ENCODE measurements at regions of chr2 and their contacts with region 1.

Region 1: GRCh38 chr2:168461942-168462331 is 5.9 kb downstream of the CERS6 start:
- DNase-seq: no peak
- ATAC-seq: no peak
- H3K4me3 ChIP-seq: peak overlapping the region; percentile 48; the same call in 1 of the 2 replicates
- H3K27ac ChIP-seq: no peak overlapping the region; the same call in 1 of the 2 replicates
- H3K4me1 ChIP-seq: peaks cover 33% of the 10 kb centered on the region
- H3K27me3 ChIP-seq: no peaks in the 10 kb centered on the region
- CTCF ChIP-seq: 0 out of 6 replicates have a peak, but pooled peaks of 1 of the 3 experiments have one; percentile 10
- EP300 ChIP-seq: no peak
- POLR2A ChIP-seq: no peak
- RAD21 ChIP-seq: no peak

Region 2: DNA sequence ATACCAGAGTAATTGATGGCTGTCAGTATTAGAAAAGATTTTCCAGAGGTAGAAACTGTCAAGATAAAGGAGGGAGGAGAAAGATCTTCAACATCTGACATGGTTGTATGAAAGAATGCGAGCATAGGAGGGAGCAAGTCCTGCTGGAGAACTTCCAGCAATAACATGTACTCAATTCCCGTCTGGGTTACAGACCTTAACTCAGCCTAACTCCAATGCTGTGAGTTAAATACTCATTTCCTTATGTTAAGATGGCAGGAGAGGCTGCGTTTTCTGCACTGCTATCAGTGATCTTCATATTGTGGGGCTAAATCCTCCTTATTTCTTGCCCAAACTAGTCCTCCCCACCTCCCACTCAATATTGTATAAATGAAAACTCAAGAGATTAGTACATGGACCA is 12.5 kb before region 1 on chr2:
- CTCF ChIA-PET with region 1: no interaction called
- POLR2A ChIA-PET with region 1: no interaction called
- RAD21 ChIA-PET with region 1: no interaction called
- SMC1A ChIA-PET with region 1: no interaction called
- in situ Hi-C with region 1: no loop called
- intact Hi-C with region 1: no loop called
- DNase-seq: no peak
- ATAC-seq: no peak
- H3K4me3 ChIP-seq: no peak overlapping the region
- H3K27ac ChIP-seq: no peak overlapping the region
- H3K4me1 ChIP-seq: no peaks in the 10 kb centered on the region
- H3K27me3 ChIP-seq: no peaks in the 10 kb centered on the region
- CTCF ChIP-seq: no peak
- EP300 ChIP-seq: no peak
- POLR2A ChIP-seq: no peak
- RAD21 ChIP-seq: no peak

Region 3: DNA sequence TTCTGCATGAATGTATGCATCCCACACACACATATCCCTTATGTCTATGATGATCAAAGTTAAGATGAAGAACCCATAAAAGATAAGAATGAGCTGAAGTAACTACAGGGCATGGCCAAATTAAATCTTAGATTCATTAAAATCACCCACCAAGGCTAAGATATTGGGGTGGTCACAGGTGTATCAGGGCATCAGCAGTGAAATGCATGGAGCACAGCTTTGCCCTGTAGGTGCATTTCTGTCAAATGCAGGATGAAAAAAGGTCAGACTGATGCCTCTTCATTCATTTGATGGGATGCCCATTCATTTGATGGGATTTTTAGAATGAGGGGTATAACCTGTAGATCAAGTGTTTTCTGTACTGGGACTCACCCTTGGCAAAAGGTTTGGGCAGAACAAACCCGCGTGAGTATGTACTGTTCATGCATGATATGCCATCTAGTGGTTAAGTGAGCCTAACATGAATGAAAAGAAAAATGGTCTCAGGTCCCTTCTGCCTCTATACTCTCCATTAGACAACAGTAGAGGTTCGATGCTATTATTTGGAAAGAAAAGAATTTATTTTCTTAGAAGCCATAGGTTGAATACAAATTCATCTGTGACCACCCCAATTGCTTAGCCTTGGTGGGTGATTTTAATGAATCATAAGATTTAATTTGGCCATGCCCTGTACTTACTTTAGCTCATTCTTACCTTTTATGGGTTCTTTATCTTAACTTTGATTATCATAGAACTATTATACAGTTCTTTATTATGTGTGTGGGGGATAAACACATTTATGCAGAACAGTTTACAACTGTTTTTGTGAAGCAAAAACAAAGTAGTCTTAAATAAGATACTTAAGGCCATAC is 297.3 kb after region 1 on chr2:
- CTCF ChIA-PET with region 1: no interaction called
- POLR2A ChIA-PET with region 1: no interaction called
- RAD21 ChIA-PET with region 1: no interaction called
- SMC1A ChIA-PET with region 1: no interaction called
- in situ Hi-C with region 1: no loop called
- intact Hi-C with region 1: loop called (anchors 5 kb)
- DNase-seq: peak; percentile 16
- ATAC-seq: peak; percentile 96
- H3K4me3 ChIP-seq: no peak overlapping the region
- H3K27ac ChIP-seq: no peak overlapping the region
- H3K4me1 ChIP-seq: peaks cover 5% of the 10 kb centered on the region; the same call in 1 of the 2 replicates
- H3K27me3 ChIP-seq: no peaks in the 10 kb centered on the region
- CTCF ChIP-seq: peak; percentile 52 to 68 (median 55); a peak in 5 of 6 replicates
- EP300 ChIP-seq: no peak
- POLR2A ChIP-seq: no peak
- RAD21 ChIP-seq: peak; percentile 83

Measured in GM12878 (cell line).